Posterior vena cava (tissue), 2 donors: ENCODE measurements at regions of chr3 and their contacts with region 1.

Region 1: DNA sequence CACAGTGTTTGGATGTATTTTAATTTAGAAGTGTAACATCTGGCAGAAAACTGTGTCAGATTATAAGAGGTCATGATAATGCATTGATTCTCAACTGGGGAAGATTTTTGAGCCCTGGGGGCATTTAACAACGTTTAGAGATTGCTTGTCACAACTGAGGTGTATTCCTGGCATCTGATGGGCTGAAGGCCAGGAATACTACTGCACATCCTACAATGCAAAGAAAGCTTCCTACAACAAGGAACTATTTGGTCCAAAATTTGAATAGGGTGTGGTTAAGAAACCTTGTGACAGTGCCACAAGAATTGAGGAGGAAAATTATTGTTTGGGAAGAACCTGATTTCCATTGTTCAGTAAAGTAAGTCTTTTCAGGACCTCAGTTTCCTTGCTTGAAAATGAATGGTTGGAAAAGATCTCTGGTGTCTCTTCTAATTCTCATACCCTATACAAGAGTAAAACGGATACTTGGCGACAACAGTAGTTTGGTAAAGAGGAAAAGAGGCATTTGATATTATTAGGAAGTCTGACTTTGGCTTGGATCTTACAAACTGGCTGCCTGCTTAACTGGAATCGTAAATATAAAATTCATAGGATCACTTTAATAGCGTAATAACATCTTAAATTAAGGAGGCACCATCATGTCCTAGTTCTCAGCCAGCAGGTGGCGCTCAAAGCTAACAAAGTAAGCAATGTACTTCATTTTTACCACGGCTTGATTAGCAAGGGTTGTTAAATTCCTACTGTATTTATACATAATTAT is 4.3 kb downstream of the DAZL start:
- DNase-seq: peak; percentile 90

Region 2: DNA sequence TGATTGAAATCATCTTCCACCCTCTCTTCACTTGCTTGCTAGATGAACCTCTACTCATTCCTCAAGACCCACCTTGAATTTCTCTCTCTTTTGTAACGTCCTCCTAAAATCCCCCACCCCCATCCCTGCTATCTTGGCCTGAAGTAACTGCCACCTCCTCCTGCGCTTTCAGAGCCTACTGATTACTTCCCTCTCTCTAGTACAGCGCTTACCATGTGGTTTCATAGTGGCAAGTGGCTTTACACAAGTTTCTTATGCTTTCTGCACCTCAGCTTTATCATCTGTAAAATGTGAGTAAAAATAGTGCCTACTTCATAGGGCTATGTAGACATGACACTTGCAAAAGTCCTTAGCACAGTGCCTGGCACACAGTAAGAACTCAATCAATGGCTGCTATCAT is 33.0 kb after region 1 on chr3:
- intact Hi-C with region 1: loop called in 1 of 2 experiments (anchors 2 kb)
- DNase-seq: no peak

Region 3: GRCh38 chr3:16665282-16665741 is 64.4 kb after region 1 on chr3:
- intact Hi-C with region 1: no loop called
- DNase-seq: no peak

Region 4: GRCh38 chr3:17032407-17033034 is 431.6 kb after region 1 on chr3:
- intact Hi-C with region 1: loop called (anchors 10 kb)
- DNase-seq: no peak

Region 5: DNA sequence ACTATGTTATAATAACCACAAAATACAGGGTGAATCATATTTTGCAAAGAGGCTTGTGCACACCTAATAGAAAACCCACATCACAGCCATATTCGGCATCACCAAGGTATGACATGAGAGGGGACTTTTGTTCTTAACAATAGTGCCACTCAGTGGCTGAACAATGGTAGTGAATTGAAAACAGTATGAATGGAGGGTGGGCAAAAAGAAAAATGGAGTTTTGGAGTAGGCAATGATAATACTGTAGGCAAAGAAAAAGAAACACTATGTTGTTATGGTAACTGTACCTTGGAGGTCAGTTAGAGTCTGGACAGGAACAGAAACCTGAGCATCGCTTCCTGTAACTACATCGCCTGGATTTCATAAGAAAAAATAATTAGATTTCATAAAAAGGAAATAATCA is 632.4 kb after region 1 on chr3:
- intact Hi-C with region 1: loop called (anchors 5 to 10 kb)
- DNase-seq: no peak